ENCODE measurements at regions of chr5 and their contacts with region 1.

Region 1: GRCh38 chr5:102583276-102584124 is 84.7 kb upstream of the SLCO6A1 start:
- DNase-seq: no peak
- H3K4me3 ChIP-seq: no peak overlapping the region
- H3K27ac ChIP-seq: no peak overlapping the region
- H3K4me1 ChIP-seq: no peaks in the 10 kb centered on the region
- H3K27me3 ChIP-seq: no peaks in the 10 kb centered on the region
- CTCF ChIP-seq: peak; percentile 9 to 36

Region 2: GRCh38 chr5:102670224-102670836 is 86.8 kb after region 1 on chr5:
- CTCF ChIA-PET with region 1: no interaction called
- dilution Hi-C with region 1: no loop called
- in situ Hi-C with region 1: no loop called
- intact Hi-C with region 1: loop called (anchors 1 kb)
- DNase-seq: peak; percentile 12
- H3K4me3 ChIP-seq: no peak overlapping the region
- H3K27ac ChIP-seq: no peak overlapping the region
- H3K4me1 ChIP-seq: no peaks in the 10 kb centered on the region
- H3K27me3 ChIP-seq: peaks cover 5% of the 10 kb centered on the region
- CTCF ChIP-seq: peak; percentile 83

Region 3: GRCh38 chr5:102700120-102700831 is 116.8 kb after region 1 on chr5:
- CTCF ChIA-PET with region 1: no interaction called
- dilution Hi-C with region 1: no loop called
- in situ Hi-C with region 1: no loop called
- intact Hi-C with region 1: no loop called
- DNase-seq: no peak
- H3K4me3 ChIP-seq: no peak overlapping the region
- H3K27ac ChIP-seq: no peak overlapping the region
- H3K4me1 ChIP-seq: no peaks in the 10 kb centered on the region
- H3K27me3 ChIP-seq: no peaks in the 10 kb centered on the region
- CTCF ChIP-seq: no peak

Region 4: GRCh38 chr5:102792705-102793104 is 209.2 kb after region 1 on chr5:
- CTCF ChIA-PET with region 1: no interaction called
- dilution Hi-C with region 1: no loop called
- in situ Hi-C with region 1: no loop called
- intact Hi-C with region 1: loop called (anchors 2 kb)
- DNase-seq: no peak
- H3K4me3 ChIP-seq: no peak overlapping the region
- H3K27ac ChIP-seq: no peak overlapping the region
- H3K4me1 ChIP-seq: peaks cover 3% of the 10 kb centered on the region
- H3K27me3 ChIP-seq: no peaks in the 10 kb centered on the region
- CTCF ChIP-seq: peak; percentile 37 to 42

Region 5: DNA sequence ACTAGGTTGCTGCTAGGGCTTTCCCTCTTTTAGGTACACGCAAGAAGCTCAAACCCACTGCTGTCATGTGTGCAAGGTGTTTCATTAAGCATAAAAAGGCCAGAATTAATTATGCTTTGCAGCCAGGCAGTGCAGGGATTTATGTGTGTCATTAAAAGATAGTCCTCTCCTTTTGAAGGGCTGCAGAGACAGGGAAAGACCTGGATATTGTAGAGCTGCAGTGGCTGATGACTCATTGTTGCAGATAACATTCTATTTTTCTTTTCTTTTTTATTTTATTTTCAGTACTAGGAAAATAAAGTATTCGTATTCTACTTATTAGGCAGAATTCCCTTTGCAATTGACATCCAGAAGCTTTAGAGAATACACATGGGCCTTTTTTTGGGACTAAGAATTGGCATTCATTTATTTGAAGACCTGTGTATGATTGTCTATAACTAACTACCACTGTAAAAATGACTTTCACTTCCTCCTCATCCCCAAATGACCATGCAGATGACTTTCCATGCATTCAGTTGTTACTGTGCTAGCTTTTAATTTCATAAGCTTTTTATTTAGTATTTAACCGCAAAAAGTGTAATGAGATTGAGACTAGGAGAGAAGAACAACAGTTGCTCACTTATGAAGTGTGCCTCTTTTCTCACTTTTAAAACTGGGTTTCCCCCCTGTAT is 284.6 kb after region 1 on chr5:
- CTCF ChIA-PET with region 1: no interaction called
- dilution Hi-C with region 1: no loop called
- in situ Hi-C with region 1: no loop called
- intact Hi-C with region 1: no loop called
- DNase-seq: no peak
- H3K4me3 ChIP-seq: no peak overlapping the region
- H3K27ac ChIP-seq: no peak overlapping the region
- H3K4me1 ChIP-seq: peaks cover 12% of the 10 kb centered on the region
- H3K27me3 ChIP-seq: no peaks in the 10 kb centered on the region
- CTCF ChIP-seq: no peak

Region 6: DNA sequence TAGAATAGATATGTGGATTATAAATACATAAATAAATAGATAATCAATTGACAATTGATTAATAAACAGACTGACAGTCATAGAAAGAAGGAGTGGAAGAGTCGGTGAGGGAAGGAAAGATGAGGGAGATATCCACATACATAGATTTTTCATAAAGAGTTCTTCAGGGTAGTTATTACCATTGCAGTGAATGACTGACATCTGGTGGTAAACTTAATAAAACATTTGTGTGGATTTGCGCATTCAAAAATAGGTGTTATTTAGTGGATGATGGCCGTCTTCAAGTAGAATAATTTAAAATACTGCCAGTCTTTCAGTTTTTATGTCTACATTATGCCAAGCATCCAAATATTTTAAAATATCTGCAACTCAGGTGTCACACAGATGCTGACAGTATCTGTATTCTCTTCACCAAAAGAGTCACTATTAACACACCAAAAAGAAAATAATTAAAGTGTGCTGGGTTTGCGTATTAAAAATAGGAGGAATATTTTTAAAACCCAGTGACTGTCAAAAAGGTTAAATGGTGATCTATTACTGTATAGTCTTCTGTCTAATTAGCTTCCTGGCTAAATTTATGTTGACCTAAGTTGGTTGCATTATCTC is 457.7 kb after region 1 on chr5:
- CTCF ChIA-PET with region 1: no interaction called
- dilution Hi-C with region 1: no loop called
- in situ Hi-C with region 1: loop called in 1 of 2 experiments (anchors 10 kb)
- intact Hi-C with region 1: no loop called
- DNase-seq: peak; percentile 37
- H3K4me3 ChIP-seq: no peak overlapping the region
- H3K27ac ChIP-seq: no peak overlapping the region
- H3K4me1 ChIP-seq: no peaks in the 10 kb centered on the region
- H3K27me3 ChIP-seq: peaks cover 2% of the 10 kb centered on the region
- CTCF ChIP-seq: peak; percentile 28 to 56

Region 7: DNA sequence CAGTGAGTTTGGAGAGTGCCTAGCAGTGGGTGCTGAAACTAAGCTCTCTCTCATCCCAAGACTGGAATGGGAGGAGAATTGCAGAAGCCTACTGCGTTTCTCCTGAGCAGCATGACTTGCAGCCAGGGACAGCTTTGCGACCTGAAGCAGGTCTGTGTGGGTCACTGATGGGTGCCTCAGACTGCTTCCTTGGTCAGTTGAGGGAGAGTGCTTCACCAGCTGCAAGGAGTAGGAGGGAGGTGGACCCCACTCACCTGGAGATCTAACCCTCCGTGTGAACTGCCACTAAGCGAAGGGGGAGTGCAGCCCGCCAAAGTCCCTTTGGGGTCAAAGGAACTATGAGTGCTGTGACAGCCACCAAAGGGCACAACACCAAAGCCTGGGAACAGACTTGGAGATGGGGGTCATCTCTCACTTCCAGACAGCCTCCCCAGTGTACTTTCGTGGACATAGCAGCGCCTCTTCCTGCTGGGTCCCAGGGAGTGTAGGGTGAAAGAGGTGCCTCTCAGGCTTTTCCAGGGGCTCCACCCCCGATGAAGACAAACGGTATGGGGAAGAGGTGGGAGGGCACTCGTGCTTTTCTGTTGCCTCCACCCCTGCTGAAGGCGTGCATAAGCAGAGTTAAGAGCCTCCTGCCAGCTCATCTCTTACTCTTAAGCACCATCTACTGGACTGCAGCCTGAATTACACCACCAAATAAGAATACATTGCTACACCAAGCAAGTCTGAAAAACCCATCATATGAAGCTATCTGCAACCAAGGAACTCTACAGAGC is 640.8 kb after region 1 on chr5:
- CTCF ChIA-PET with region 1: no interaction called
- dilution Hi-C with region 1: no loop called
- in situ Hi-C with region 1: no loop called
- intact Hi-C with region 1: loop called (anchors 10 kb)
- DNase-seq: peak; percentile 55
- H3K4me3 ChIP-seq: no peak overlapping the region
- H3K27ac ChIP-seq: no peak overlapping the region
- H3K4me1 ChIP-seq: no peaks in the 10 kb centered on the region
- H3K27me3 ChIP-seq: no peaks in the 10 kb centered on the region
- CTCF ChIP-seq: peak; percentile 66 to 72

Measured in mammary epithelial cell (primary cell).